Activated T-helper 1 cell treated with anti-CD3 and anti-CD28 coated beads, Interleukin-12 subunit alpha, Interleukin-12 subunit beta, Interleukin-2, Interleukin-4 antibody, amounts not matched to agents 30 ng/mL and 10 ng/mL and 1 ng/mL, durations not matched to agents 14 hours and 24 hours and 36 hours (primary cell): ENCODE measurements at regions of chr19 and their contacts with region 1.

Region 1: GRCh38 chr19:55258828-55259539 is at the start of gene PPP6R1:
- DNase-seq: peak; percentile 93
- H3K4me3 Mint-ChIP-seq: peak within 1 kb of the TSS; percentile 96
- H3K27ac Mint-ChIP-seq: peak within 1 kb of the TSS; percentile 98
- H3K4me1 Mint-ChIP-seq: peaks cover 46% of the 10 kb centered on the region
- H3K27me3 Mint-ChIP-seq: no peaks in the 10 kb centered on the region
- total RNA-seq, gene PPP6R1: 200 and 202 TPM in 2 replicates

Region 2: DNA sequence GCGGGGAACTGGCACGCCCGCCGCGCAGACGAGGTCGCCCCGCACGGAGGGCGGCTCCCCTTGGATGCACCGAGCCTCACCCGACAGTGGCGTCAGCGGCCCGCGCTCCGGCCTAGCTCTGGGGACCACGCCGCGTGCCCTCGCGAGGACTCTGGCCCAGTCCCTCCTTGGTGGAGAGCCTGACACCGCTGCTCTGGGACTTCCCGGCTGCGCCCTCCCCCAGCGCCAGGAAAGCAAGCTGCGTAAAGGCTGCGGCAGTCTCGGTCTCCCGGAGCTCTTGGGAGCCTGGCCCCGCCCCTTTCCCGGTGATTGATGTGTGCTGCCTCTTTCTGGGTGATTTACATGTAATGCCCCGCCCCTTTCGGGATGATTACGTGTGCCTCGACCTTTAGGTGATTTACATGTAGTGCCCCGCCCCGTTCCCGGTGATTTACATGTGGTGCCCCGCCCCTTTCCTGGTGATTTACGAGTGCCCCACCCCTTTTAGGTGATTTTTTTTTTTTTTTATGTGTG is 795.4 kb before region 1 on chr19 and contains the start of gene LENG9:
- intact Hi-C with region 1: loop called (anchors 1 kb)
- DNase-seq: peak; percentile 96
- H3K4me3 Mint-ChIP-seq: peak within 1 kb of the TSS; percentile 84
- H3K27ac Mint-ChIP-seq: peak within 1 kb of the TSS; percentile 89
- H3K4me1 Mint-ChIP-seq: peaks cover 25% of the 10 kb centered on the region
- H3K27me3 Mint-ChIP-seq: peaks cover 21% of the 10 kb centered on the region
- total RNA-seq, gene LENG9: 8.4 and 11.5 TPM in 2 replicates

Region 3: GRCh38 chr19:55178781-55179599 is 80.0 kb before region 1 on chr19:
- intact Hi-C with region 1: loop called (anchors 1 kb)
- DNase-seq: peak; percentile 90
- H3K4me3 Mint-ChIP-seq: peak overlapping the region; percentile 64
- H3K27ac Mint-ChIP-seq: peak overlapping the region; percentile 34
- H3K4me1 Mint-ChIP-seq: peaks cover 11% of the 10 kb centered on the region
- H3K27me3 Mint-ChIP-seq: peaks cover 36% of the 10 kb centered on the region

Region 4: DNA sequence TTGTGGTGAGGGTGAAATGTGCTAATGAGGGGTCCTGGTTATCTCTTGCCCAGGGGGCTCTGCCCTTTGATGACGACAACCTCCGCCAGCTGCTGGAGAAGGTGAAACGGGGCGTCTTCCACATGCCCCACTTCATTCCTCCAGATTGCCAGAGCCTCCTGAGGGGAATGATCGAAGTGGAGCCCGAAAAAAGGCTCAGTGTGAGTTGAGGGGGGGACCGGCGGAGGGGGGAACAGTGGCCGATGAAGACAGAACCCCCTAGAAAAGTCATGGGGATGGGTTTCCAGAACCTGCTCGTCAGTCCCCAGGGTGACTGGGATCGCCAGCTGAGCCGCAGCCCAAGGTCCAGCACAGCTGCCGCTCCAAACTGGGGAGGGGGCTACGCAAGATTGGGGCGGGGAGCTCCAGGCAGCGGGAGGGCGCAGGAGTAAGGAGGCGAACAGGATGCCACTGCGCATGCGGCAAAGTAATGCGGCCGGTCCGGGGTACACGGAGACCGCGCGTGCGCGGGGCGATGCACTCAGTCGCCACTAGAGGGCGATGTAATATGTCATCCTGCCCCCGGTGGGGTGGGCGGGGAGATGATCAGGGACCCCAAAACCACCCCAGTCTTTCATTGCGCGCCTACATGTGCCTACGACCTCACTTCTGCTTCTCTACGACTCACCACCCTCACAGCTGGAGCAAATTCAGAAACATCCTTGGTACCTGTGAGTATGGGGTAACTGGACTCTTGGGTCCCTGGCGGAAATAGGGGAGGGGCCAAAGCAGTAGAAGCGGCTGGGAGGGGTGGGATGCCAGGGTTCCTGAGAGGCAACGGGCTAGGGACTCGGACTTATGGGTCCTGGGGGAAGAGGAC is 42.7 kb after region 1 on chr19:
- intact Hi-C with region 1: loop called (anchors 1 kb)
- DNase-seq: peak; percentile 91
- H3K4me3 Mint-ChIP-seq: peak overlapping the region; percentile 88
- H3K27ac Mint-ChIP-seq: peak overlapping the region; percentile 88
- H3K4me1 Mint-ChIP-seq: peaks cover 17% of the 10 kb centered on the region
- H3K27me3 Mint-ChIP-seq: no peaks in the 10 kb centered on the region

Region 5: DNA sequence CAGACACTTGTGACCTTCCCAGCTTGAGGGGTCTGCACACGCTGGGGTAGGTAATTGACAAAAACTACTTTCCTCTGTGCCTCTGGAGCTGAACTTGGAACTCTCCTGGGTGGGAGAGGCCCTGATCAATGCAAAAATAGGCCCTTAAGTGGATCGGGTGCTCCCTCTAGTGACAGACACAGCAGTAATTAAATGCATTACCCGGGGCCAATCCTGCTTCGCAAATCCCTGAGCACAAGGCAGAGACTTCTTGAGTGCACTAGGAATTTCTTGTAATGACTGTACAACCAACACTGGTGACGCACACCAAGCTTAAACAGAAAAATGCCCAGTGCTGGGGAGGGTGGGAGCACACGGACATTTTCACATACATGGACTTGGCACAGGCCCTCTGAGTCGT is 159.2 kb after region 1 on chr19:
- intact Hi-C with region 1: no loop called
- DNase-seq: peak; percentile 37
- H3K4me3 Mint-ChIP-seq: no peak overlapping the region
- H3K27ac Mint-ChIP-seq: no peak overlapping the region
- H3K4me1 Mint-ChIP-seq: peaks cover 8% of the 10 kb centered on the region
- H3K27me3 Mint-ChIP-seq: peaks cover 13% of the 10 kb centered on the region

Region 6: DNA sequence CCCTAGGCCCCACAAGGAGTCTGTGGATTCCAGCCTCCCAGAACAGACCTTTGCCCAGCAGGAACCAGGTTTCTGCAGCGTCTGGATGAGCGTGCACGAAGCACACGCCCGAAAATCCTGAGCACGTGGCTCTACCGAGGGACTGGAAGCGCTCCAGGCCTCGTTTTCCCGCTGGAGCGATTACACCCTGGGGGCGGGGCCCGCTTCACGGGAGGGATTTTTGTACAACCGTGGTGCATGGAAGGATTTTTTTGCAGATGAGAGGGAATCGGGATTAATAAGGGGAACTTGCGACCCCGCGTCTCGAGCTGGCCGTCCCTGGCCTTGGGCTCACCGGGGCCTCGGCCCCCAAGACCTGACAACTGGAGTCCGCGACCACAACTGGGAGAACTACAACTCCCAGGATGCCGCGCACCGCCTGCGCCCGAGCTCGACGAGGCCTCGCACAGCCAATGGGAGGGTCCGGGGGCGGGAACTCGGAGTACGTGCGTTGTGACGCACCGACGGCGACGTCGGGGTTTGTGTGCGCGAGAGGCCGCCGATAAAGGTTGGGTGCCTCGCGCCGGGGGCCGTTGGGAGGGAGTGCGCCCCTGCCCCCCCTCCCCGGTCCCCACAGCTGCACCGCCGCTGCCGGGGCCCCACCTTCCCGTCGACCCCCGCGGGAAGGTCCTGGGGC is 217.3 kb after region 1 on chr19 and contains the start of gene ZNF628:
- intact Hi-C with region 1: loop called (anchors 1 kb)
- DNase-seq: peak; percentile 96
- H3K4me3 Mint-ChIP-seq: peak within 1 kb of the TSS; percentile 91
- H3K27ac Mint-ChIP-seq: peak within 1 kb of the TSS; percentile 79
- H3K4me1 Mint-ChIP-seq: peaks cover 18% of the 10 kb centered on the region
- H3K27me3 Mint-ChIP-seq: peaks cover 2% of the 10 kb centered on the region
- total RNA-seq, gene ZNF628: 7.6 and 10.4 TPM in 2 replicates

Region 7: DNA sequence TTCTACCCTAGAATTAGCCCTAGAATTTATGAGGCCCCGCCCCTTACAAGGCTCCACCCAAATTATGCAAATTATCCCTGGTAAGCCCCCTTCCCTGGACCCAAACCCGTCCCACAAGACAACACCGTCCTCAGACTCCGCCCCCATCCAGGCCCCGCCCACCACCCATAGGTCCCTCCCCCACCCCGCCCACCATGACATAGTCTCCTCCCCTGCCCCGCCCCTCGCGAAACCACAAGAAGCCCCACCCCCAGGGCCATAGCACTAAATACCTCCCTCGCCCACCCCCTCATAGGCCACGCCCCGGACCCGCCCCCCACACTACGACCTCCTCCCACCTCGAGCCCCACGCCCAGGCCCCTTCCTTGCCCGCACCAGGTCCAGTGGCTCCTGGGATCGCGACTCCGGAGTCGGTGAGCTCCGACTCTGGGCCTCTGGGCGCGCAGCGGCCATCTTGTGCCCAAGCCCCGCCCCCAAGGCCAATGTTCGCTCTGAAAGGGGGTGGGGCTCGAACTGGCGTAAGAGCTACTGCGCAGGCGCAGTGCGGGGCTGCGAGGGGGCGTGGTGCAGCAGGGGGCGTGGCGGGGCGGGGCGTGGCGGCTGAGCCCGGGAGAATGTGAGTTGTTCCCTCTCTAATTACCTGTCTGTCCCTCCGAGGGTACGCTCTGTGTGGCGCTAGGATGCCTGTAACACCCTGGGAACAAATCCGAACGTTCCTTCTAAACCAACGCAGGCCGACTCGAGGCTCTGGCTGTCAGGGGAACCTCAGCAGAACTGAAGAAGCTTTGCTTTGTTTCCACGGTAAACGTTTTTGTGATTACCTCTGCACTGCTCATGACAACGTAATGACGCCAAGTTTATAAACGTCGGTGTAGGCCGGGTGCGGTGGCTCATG is 365.4 kb after region 1 on chr19 and contains the start of gene ZNF784:
- intact Hi-C with region 1: loop called (anchors 1 kb)
- DNase-seq: peak; percentile 91
- H3K4me3 Mint-ChIP-seq: peak within 1 kb of the TSS; percentile 90
- H3K27ac Mint-ChIP-seq: peak within 1 kb of the TSS; percentile 98
- H3K4me1 Mint-ChIP-seq: peaks cover 46% of the 10 kb centered on the region
- H3K27me3 Mint-ChIP-seq: peaks cover 20% of the 10 kb centered on the region
- total RNA-seq, gene ZNF784: 3.0 and 4.9 TPM in 2 replicates